ENCODE measurements at regions of chr11 and their contacts with region 1.

Region 1: DNA sequence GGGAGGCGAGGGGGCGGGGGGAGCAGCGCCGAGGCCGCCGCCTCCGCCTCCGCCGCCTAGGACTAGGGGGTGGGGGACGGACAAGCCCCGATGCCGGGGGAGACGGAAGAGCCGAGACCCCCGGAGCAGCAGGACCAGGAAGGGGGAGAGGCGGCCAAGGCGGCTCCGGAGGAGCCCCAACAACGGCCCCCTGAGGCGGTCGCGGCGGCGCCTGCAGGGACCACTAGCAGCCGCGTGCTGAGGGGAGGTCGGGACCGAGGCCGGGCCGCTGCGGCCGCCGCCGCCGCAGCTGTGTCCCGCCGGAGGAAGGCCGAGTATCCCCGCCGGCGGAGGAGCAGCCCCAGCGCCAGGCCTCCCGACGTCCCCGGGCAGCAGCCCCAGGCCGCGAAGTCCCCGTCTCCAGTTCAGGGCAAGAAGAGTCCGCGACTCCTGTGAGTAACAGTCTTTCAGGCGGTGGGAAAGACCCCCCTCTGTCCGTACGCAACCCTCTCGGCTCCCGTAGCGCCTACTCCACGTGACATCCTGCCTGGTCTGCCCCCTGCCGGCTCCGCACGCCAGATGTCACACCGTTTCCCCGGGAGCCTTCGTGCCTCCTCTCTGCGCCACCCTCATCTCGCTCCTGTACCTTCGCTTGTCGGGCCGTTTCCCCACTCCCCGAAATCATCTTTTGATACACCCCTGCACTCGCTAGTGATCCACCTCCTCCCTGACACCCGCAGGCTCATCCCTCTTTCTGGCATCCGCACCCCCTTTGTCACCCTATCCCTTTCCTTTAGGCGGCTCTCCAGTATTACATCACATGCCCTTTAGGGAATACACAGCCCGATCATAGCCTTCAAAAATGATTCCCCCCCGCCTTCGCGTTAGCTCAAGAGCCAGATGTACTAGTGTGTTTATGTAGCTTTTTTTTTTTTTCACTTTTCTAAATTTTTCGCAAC is 598 bp downstream of the ZFP91 start:
- DNase-seq: peak; percentile 85
- H3K4me3 Mint-ChIP-seq: peak overlapping the region; percentile 94
- H3K27ac Mint-ChIP-seq: peak overlapping the region; percentile 100
- H3K4me1 Mint-ChIP-seq: peaks cover 73% of the 10 kb centered on the region
- H3K27me3 Mint-ChIP-seq: no peaks in the 10 kb centered on the region

Region 2: DNA sequence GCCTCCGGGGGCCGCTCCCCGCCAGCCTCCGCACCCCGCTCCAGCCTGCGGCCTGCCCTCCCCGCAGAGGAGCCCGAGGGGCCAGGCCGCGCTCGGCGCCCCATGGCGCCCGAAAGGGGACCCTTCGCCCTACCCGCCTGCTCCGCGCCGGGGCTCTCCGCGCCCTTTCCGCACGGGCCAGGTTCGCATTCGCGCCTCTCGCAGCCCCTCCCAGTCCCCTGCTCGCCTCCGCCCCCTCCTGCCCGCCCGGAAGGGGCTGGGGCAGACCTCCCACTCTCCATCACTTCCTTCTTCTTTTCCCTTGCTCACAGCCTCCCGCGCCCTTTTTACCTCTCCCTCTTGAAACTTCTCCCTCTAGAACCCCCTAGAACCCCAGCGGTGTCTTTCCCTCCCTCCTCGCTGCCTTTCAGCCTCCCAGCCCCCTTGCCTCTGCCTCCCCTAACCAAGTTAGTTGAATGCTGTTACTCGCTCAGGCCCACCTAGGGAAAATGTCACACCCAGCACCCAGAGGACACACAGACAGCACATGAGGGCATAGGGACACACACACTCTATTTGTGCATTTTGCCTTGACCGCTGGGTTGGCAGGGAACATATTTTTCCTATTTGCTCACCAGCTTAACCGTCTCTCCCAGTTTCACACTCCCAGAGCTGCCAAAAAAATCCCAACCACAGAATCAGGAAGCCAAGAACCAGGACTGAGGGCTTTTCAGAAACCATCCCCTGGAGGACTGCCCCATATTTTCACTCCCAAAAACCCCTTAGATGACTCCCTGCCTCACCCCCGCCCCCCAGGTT is 1152.3 kb before region 1 on chr11 and contains the start of gene SLC43A3:
- intact Hi-C with region 1: loop called (anchors 5 kb)
- DNase-seq: peak; percentile 60
- H3K4me3 Mint-ChIP-seq: peak within 1 kb of the TSS; percentile 90
- H3K27ac Mint-ChIP-seq: peak within 1 kb of the TSS; percentile 80
- H3K4me1 Mint-ChIP-seq: peaks cover 56% of the 10 kb centered on the region
- H3K27me3 Mint-ChIP-seq: peaks cover 3% of the 10 kb centered on the region
- total RNA-seq, gene SLC43A3: 181 and 184 TPM in 2 replicates

Region 3: DNA sequence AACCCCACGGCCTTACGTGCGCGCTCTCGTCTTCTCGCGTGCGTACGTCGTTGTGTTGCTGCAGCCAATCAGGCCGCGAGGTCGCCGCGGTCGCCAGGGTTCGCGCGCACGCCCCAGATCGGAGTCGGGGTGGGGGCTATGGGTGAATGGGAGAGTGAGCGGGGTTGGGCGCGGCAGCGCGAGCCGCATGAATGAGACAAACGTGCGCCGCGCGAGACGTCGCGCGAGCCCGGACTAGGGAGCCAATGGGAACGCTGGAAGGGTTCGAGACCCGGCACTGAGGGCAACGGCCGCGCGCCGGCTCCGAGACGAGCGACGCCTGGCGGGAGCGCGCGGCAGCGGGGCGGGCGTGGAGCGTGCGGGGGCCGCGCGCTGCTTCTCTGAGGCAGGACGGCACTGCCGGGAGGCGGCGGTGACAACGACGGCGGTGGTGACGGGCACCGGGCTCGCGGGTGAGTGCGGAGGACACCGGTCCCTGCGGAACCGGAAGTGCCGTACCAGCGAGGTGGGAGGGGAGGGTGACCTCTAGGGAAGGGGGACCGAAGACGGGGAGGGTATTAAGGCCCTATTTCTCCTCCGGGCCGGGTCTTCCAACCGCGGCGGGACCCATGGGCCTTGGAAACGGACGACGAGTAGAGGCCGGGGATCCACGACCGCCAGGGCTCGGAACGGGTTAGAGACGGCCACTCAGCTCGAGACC is 911.6 kb before region 1 on chr11 and contains the start of gene ZDHHC5:
- intact Hi-C with region 1: loop called (anchors 1 kb)
- DNase-seq: peak; percentile 99
- H3K4me3 Mint-ChIP-seq: peak within 1 kb of the TSS; percentile 99
- H3K27ac Mint-ChIP-seq: peak within 1 kb of the TSS; percentile 97
- H3K4me1 Mint-ChIP-seq: peaks cover 31% of the 10 kb centered on the region
- H3K27me3 Mint-ChIP-seq: no peaks in the 10 kb centered on the region
- total RNA-seq, gene ZDHHC5: 78.4 and 79.1 TPM in 2 replicates

Region 4: DNA sequence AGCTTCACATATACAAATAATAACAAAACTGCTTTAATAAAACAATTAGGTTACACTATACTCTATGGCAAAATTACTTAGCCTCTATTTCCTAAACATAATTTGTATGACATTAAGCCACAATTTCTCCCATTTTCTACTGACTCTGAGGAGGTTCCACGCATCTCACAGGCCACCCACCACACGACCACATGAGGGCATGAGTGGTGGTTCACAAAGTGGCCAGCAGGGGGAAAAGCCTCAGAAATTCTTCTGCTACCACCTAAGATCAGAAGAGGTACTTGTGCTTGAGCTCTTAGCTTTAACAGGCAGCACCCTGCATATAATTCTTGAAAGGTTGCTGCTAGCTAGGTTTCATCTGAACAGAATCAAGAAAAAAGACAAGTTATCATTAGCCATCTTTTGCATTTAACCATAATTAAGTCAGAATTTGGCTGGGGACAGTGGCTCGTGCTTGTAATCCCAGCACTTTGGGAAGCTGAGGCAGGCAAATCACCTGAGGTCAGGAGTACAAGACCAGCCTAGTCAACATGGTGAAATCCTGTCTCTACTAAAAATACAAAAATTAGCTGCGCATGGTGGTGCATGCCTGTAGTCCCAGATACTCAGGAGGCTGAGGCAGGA is 11.5 kb before region 1 on chr11:
- intact Hi-C with region 1: loop called (anchors 1 kb)
- DNase-seq: peak; percentile 53
- H3K4me3 Mint-ChIP-seq: peak overlapping the region; percentile 34
- H3K27ac Mint-ChIP-seq: peak overlapping the region; percentile 28
- H3K4me1 Mint-ChIP-seq: peaks cover 56% of the 10 kb centered on the region
- H3K27me3 Mint-ChIP-seq: no peaks in the 10 kb centered on the region

Region 5: GRCh38 chr11:59106363-59107336 is 527.2 kb after region 1 on chr11 and contains the start of gene FAM111B:
- intact Hi-C with region 1: loop called (anchors 1 kb)
- DNase-seq: peak; percentile 73
- H3K4me3 Mint-ChIP-seq: peak within 1 kb of the TSS; percentile 93
- H3K27ac Mint-ChIP-seq: peak within 1 kb of the TSS; percentile 82
- H3K4me1 Mint-ChIP-seq: peaks cover 80% of the 10 kb centered on the region
- H3K27me3 Mint-ChIP-seq: no peaks in the 10 kb centered on the region
- total RNA-seq, gene FAM111B: 54.9 and 57.3 TPM in 2 replicates

Region 6: GRCh38 chr11:59668950-59669610 is 1089.6 kb after region 1 on chr11 and contains the start of gene PATL1:
- intact Hi-C with region 1: loop called (anchors 2 kb)
- DNase-seq: peak; percentile 98
- H3K4me3 Mint-ChIP-seq: peak within 1 kb of the TSS; percentile 94
- H3K27ac Mint-ChIP-seq: peak within 1 kb of the TSS; percentile 97
- H3K4me1 Mint-ChIP-seq: peaks cover 46% of the 10 kb centered on the region
- H3K27me3 Mint-ChIP-seq: peaks cover 2% of the 10 kb centered on the region
- total RNA-seq, gene PATL1: 68.7 and 74.0 TPM in 2 replicates

Measured in activated T-helper 1 cell treated with anti-CD3 and anti-CD28 coated beads, Interleukin-12 subunit alpha, Interleukin-12 subunit beta, Interleukin-2, Interleukin-4 antibody, amounts not matched to agents 30 ng/mL and 10 ng/mL and 1 ng/mL, durations not matched to agents 14 hours and 24 hours and 36 hours (primary cell).